Dendritic cell treated with granulocyte-macrophage colony-stimulating factor and Interleukin-4, amounts not matched to agents 40 ng/mL and 50 ng/mL, for 4 days (primary cell): ENCODE measurements at regions of chr17 and their contacts with region 1.

Region 1: DNA sequence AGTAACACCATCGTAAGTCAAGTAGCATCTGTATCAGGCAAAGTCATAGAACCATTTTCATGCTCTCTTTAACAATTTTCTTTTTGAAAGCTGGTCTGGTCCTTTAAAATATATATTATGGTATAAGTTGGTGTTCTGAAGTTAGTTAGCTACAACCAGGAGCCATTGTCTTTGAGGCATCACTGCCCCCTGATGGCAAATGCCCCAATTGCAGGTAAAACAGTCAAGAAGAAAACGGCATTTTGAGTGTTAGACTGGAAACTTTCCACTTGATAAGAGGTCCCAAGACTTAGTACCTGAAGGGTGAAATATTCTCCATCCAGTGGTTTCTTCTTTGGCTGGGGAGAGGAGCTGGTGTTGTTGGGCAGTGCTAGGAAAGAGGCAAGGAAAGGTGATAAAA is 14.1 kb downstream of the TP53 start:
- H3K4me3 Mint-ChIP-seq: no peak overlapping the region
- H3K27ac Mint-ChIP-seq: no peak overlapping the region
- H3K4me1 Mint-ChIP-seq: no peaks in the 10 kb centered on the region
- H3K27me3 Mint-ChIP-seq: no peaks in the 10 kb centered on the region

Region 2: DNA sequence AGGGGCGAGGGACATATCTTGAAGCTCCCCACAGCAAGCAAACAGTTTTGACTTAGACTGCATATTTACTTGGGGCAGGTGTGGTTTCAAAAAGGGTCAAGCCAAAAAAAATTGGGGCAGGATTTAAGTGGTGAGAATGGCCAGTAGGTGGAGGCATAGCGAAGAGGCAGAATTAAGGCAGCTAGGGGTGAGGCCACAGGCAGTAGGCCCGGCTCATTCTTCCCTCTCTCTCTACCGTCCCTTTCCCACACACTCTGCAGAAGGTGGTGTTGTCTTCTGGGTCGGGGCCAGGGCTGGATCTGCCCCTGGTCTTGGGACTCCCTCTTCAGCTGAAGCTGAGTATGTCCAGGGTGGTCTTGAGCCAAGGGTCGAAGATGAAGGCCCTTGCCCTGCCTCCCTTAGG is 40.7 kb before region 1 on chr17:
- intact Hi-C with region 1: loop called (anchors 1 kb)
- H3K4me3 Mint-ChIP-seq: no peak overlapping the region
- H3K27ac Mint-ChIP-seq: peak overlapping the region; percentile 49
- H3K4me1 Mint-ChIP-seq: peaks cover 5% of the 10 kb centered on the region
- H3K27me3 Mint-ChIP-seq: peaks cover 11% of the 10 kb centered on the region

Region 3: GRCh38 chr17:7745748-7746470 is 72.7 kb after region 1 on chr17:
- intact Hi-C with region 1: no loop called
- H3K4me3 Mint-ChIP-seq: no peak overlapping the region
- H3K27ac Mint-ChIP-seq: no peak overlapping the region
- H3K4me1 Mint-ChIP-seq: no peaks in the 10 kb centered on the region
- H3K27me3 Mint-ChIP-seq: peaks cover 3% of the 10 kb centered on the region